GM10248 (cell line): ENCODE measurements at regions of chr10 and their contacts with region 1.

Region 1: GRCh38 chr10:98943681-98944080 is 292.0 kb downstream of the HPSE2 start:
- DNase-seq: no peak
- CTCF ChIP-seq: no peak

Region 2: GRCh38 chr10:98899018-98899417 is 44.7 kb before region 1 on chr10:
- CTCF ChIA-PET with region 1: no interaction called
- POLR2A ChIA-PET with region 1: no interaction called
- DNase-seq: no peak
- CTCF ChIP-seq: no peak

Region 3: GRCh38 chr10:98920807-98921206 is 22.9 kb before region 1 on chr10:
- CTCF ChIA-PET with region 1: interaction called, 11 read pairs
- POLR2A ChIA-PET with region 1: no interaction called
- DNase-seq: no peak
- CTCF ChIP-seq: no peak